Calu3 (cell line): ENCODE measurements at regions of chr9 and their contacts with region 1.

Region 1: DNA sequence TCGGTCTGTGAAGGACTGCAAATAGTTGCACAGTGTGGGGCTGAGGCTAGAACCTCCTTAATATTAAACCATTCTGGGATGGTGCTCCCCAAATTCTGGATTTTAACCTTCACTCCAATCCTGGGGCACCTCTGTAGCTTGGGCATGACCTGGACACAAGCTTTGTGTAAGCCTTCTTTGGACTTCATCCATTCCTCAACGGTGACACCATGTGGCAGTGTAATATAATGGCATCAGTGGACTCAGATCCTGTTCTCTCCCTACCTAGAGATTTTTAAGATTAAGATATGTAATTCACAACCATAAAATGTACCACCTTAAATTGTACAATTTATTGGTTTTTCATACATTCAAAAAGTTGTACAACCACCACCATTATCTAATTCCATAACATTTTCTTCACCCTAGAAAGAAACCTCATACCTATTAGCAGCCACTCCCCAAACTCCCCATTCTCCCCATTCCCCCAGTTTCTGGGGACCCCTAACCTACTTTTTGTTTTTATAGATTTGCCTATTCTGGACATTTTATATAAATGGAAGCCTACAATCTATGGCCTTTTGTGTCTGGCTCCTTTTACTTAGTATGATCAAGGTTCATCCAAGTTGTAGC is 4.8 kb upstream of the PLGRKT start:
- DNase-seq: peak; percentile 41
- H3K4me3 Mint-ChIP-seq: no peak overlapping the region
- H3K27ac Mint-ChIP-seq: no peak overlapping the region
- H3K4me1 Mint-ChIP-seq: peaks cover 23% of the 10 kb centered on the region
- H3K27me3 Mint-ChIP-seq: no peaks in the 10 kb centered on the region
- CTCF ChIP-seq: peak; percentile 27

Region 2: DNA sequence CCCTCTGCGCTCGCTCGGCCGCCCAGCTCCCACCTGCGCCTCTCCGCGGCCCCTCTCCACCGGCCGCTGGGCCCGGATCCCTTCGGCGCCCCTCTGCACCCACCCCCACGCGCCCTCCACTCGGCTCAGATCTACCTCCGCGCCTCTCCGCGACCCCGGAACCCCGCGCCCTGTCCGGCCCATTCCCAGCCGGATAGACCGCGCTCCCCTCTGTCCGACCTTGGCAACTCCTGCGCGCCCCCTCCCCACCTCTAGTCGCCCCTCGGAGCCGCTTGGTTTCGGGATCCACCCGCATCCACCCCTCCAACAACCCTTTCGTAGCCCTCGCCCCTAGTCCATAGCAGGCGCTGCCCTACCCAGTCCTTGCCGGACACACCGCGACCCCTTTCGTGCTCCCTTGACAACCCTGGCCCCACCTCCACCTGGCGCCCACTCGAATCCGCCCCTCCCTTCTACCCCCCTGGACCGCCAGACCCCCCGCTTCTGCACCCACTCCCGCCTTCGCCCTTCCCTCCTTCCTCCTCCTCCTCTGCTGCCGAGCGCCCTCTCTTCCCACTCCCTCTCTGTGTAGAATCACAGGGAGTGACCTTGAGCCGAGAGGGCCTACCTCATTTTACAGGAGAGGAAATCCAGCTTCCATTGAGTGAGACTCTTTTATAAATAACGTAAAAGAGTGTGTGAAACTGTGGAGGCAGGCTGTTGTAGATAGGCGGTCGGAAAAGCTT is 701.0 kb before region 1 on chr9:
- CTCF ChIA-PET with region 1: interaction called, 12 read pairs
- intact Hi-C with region 1: no loop called
- DNase-seq: no peak
- H3K4me3 Mint-ChIP-seq: peak overlapping the region; percentile 80
- H3K27ac Mint-ChIP-seq: no peak overlapping the region
- H3K4me1 Mint-ChIP-seq: peaks cover 9% of the 10 kb centered on the region
- H3K27me3 Mint-ChIP-seq: no peaks in the 10 kb centered on the region
- CTCF ChIP-seq: no peak

Region 3: GRCh38 chr9:4750023-4750673 is 692.4 kb before region 1 on chr9:
- CTCF ChIA-PET with region 1: no interaction called
- intact Hi-C with region 1: loop called (anchors 10 kb)
- DNase-seq: no peak
- H3K4me3 Mint-ChIP-seq: no peak overlapping the region
- H3K27ac Mint-ChIP-seq: no peak overlapping the region
- H3K4me1 Mint-ChIP-seq: no peaks in the 10 kb centered on the region
- H3K27me3 Mint-ChIP-seq: peaks cover 17% of the 10 kb centered on the region
- CTCF ChIP-seq: no peak

Region 4: GRCh38 chr9:5586391-5586802 is 143.9 kb after region 1 on chr9:
- CTCF ChIA-PET with region 1: no interaction called
- intact Hi-C with region 1: no loop called
- DNase-seq: no peak
- H3K4me3 Mint-ChIP-seq: no peak overlapping the region
- H3K27ac Mint-ChIP-seq: no peak overlapping the region
- H3K4me1 Mint-ChIP-seq: no peaks in the 10 kb centered on the region
- H3K27me3 Mint-ChIP-seq: no peaks in the 10 kb centered on the region
- CTCF ChIP-seq: no peak

Region 5: GRCh38 chr9:5617749-5618148 is 175.2 kb after region 1 on chr9:
- CTCF ChIA-PET with region 1: no interaction called
- intact Hi-C with region 1: no loop called
- DNase-seq: no peak
- H3K4me3 Mint-ChIP-seq: no peak overlapping the region
- H3K27ac Mint-ChIP-seq: no peak overlapping the region
- H3K4me1 Mint-ChIP-seq: no peaks in the 10 kb centered on the region
- H3K27me3 Mint-ChIP-seq: no peaks in the 10 kb centered on the region
- CTCF ChIP-seq: no peak